ENCODE measurements at regions of chr11 and their contacts with region 1.

Region 1: GRCh38 chr11:58579192-58580129 is 598 bp downstream of the ZFP91 start:
- DNase-seq: peak; percentile 88
- H3K4me3 Mint-ChIP-seq: peak overlapping the region; percentile 100
- H3K27ac Mint-ChIP-seq: peak overlapping the region; percentile 100
- H3K4me1 Mint-ChIP-seq: peaks cover 26% of the 10 kb centered on the region
- H3K27me3 Mint-ChIP-seq: no peaks in the 10 kb centered on the region
- CTCF ChIP-seq: peak; percentile 55

Region 2: GRCh38 chr11:57667736-57668435 is 911.6 kb before region 1 on chr11 and contains the start of gene ZDHHC5:
- CTCF ChIA-PET with region 1: no interaction called
- POLR2A ChIA-PET with region 1: interaction called, 7 read pairs
- intact Hi-C with region 1: loop called (anchors 1 kb)
- DNase-seq: peak; percentile 99
- H3K4me3 Mint-ChIP-seq: peak within 1 kb of the TSS; percentile 96
- H3K27ac Mint-ChIP-seq: peak within 1 kb of the TSS; percentile 100
- H3K4me1 Mint-ChIP-seq: peaks cover 18% of the 10 kb centered on the region
- H3K27me3 Mint-ChIP-seq: no peaks in the 10 kb centered on the region
- CTCF ChIP-seq: peak; percentile 44
- total RNA-seq, gene ZDHHC5: 73.8 and 74.6 TPM in 2 replicates

Region 3: GRCh38 chr11:58179648-58180047 is 399.8 kb before region 1 on chr11:
- CTCF ChIA-PET with region 1: no interaction called
- POLR2A ChIA-PET with region 1: no interaction called
- intact Hi-C with region 1: no loop called
- DNase-seq: no peak
- H3K4me3 Mint-ChIP-seq: no peak overlapping the region
- H3K27ac Mint-ChIP-seq: no peak overlapping the region
- H3K4me1 Mint-ChIP-seq: no peaks in the 10 kb centered on the region
- H3K27me3 Mint-ChIP-seq: no peaks in the 10 kb centered on the region
- CTCF ChIP-seq: no peak

Region 4: GRCh38 chr11:58629857-58630256 is 50.4 kb after region 1 on chr11:
- CTCF ChIA-PET with region 1: interaction called, 41 read pairs
- POLR2A ChIA-PET with region 1: interaction called, 89 read pairs
- intact Hi-C with region 1: loop called (anchors 1 kb)
- DNase-seq: peak; percentile 61
- H3K4me3 Mint-ChIP-seq: no peak overlapping the region
- H3K27ac Mint-ChIP-seq: no peak overlapping the region
- H3K4me1 Mint-ChIP-seq: peaks cover 28% of the 10 kb centered on the region
- H3K27me3 Mint-ChIP-seq: no peaks in the 10 kb centered on the region
- CTCF ChIP-seq: peak; percentile 51

Region 5: DNA sequence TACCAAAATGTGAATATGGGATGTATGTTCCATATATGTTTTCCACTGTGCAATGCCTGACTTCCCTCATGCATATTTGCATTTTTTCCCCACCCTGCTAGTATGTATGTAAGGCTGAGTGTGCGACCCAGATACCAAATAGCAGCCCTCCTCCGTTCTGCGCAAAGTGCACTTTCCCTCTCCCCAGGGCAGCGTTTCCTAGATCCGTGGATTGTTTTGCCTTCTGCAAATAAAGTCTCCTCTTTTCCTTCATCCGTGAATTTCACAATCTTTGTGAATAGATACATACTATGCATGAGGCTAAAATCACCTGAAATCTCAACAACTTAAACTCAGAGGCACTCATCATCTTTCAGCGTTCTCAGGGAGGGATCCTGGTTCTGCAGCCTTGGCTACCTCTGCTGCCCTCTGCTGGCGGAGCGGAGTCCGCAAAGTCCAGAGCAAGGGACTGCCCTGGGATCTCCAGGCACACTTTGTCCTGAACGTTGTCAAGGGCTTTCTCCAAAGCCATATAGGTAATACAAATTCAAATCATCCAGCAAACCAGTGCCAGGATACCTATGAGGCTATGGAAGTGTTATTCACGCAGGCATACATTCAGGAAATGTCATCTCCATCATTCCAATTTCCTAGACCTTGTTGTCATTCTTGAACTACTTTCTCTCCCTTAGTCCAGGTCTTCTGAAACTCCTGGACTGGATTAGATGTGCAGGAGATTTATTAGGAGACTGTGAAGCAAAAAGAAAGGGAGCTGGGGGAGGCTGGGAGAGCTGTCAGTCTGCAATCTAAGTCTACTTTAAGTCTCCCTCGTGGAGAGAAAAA is 96.1 kb after region 1 on chr11:
- CTCF ChIA-PET with region 1: interaction called, 20 read pairs
- POLR2A ChIA-PET with region 1: no interaction called
- intact Hi-C with region 1: no loop called
- DNase-seq: peak; percentile 63
- H3K4me3 Mint-ChIP-seq: no peak overlapping the region
- H3K27ac Mint-ChIP-seq: no peak overlapping the region
- H3K4me1 Mint-ChIP-seq: no peaks in the 10 kb centered on the region
- H3K27me3 Mint-ChIP-seq: no peaks in the 10 kb centered on the region
- CTCF ChIP-seq: peak; percentile 83

Region 6: DNA sequence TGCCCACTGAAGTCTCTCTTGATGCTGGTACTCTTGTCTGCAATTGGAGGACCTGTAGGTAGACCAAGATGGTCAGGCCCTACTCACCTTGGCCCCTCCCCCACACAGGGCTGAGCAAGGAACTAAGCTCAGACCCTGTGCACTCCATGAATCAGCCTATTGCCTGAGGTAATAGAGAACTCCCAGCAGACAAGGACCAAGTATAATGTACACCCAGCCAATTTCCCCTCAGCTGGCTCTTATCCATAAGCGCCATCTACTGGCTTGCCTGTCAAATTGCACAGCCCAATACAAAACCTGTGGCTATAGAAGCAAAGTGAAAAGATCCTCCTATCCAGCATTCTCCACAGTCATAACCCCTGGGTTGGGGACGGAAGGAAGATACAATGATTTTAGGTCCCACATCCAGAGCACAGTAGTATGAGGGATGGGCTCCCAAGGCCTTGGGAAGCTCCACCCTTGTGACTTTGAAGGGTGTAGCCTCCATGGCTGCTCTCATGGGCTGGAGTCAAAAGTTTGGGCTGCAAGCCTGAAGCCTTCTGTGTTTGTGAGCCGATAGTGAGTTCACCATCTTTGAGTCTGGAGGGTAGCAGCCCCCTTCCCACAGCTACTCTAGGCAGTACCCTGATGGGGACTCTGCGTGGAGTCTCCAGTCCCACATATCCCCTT is 209.0 kb after region 1 on chr11:
- CTCF ChIA-PET with region 1: interaction called, 38 read pairs
- POLR2A ChIA-PET with region 1: interaction called, 3 read pairs
- intact Hi-C with region 1: loop called (anchors 1 kb)
- DNase-seq: peak; percentile 78
- H3K4me3 Mint-ChIP-seq: no peak overlapping the region
- H3K27ac Mint-ChIP-seq: no peak overlapping the region
- H3K4me1 Mint-ChIP-seq: peaks cover 7% of the 10 kb centered on the region
- H3K27me3 Mint-ChIP-seq: no peaks in the 10 kb centered on the region
- CTCF ChIP-seq: peak; percentile 89

Region 7: DNA sequence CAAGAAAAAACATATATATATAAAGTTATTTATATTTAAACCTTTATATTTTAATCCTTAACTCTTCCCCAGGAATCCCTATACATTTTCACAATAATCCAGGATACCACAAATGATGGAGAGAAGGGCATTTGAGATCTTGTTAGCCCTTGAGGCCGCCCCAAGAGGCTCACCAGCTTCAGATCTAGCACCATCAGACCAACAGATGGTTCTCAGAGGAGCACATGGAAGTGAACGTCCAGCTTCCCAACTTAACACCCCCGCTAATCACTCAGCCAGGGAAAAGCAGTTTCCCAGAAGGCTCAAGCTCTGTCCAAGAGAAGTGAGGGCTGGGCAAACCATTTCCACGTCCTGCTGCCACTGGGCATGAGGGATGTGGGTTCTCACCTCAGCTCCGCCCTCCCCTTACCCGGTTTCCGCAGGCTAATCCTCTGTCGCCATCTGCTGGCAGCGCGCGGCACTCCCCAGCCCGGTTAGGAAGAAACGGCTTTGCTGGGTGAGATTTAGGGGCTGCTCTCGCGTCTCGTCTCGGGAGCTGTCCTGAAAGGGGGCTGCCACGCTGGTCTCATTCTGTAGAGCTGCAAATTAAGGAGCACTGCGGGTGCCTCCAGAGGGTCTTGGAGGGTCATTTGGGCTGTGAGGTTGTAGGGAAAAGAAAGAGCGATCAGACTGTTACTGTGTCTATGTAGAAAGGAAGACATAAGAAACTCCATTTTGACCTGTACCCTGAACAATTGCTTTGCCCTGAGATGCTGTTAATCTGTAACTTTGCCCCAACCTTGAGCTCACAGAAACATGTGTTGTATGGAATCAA is 556.4 kb after region 1 on chr11:
- CTCF ChIA-PET with region 1: interaction called, 10 read pairs
- POLR2A ChIA-PET with region 1: no interaction called
- intact Hi-C with region 1: loop called (anchors 5 kb)
- DNase-seq: peak; percentile 73
- H3K4me3 Mint-ChIP-seq: no peak overlapping the region
- H3K27ac Mint-ChIP-seq: peak overlapping the region; percentile 24
- H3K4me1 Mint-ChIP-seq: peaks cover 6% of the 10 kb centered on the region
- H3K27me3 Mint-ChIP-seq: no peaks in the 10 kb centered on the region
- CTCF ChIP-seq: peak; percentile 98

Region 8: DNA sequence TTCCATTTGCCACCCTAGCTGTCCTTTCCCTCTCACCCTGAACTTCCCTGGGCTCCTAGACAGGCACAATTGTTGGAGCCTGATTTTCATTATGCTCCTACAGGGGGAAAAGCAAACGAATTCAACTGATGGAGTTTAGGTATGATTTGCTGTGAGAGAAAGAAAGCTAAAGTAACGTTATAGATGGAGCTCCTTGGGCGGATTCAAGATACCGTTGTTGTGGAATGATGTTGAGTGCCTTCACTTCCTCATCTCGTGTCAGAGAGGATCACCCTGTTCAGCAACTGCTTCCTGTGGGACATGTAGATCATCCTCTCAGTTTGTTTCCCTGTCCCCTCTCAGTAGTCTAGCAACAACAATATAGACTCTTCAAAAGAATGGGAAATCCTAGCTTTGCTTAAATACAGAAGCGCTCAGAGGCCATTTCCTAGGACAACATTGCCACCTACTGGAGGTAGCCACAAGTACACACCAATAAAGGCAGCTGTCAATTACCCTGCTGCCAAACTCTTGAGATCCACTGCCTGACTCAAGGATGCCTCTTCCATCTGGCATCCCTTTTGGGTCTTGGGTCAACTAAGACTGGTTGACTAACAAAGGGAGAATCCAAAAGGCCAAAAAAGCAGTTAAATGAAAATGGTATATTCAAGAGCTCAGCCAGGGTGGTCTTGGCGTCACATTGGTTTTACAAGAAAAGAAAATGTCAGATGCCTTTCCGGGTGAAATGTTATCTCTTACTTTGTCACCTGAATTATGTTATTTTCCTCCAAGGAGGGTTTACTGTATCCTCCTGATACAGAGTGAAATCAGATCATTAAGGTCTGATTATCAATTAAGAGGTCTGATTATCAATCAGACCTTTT is 579.0 kb after region 1 on chr11:
- CTCF ChIA-PET with region 1: interaction called, 4 read pairs
- POLR2A ChIA-PET with region 1: interaction called, 3 read pairs
- intact Hi-C with region 1: loop called (anchors 5 kb)
- DNase-seq: peak; percentile 78
- H3K4me3 Mint-ChIP-seq: no peak overlapping the region
- H3K27ac Mint-ChIP-seq: no peak overlapping the region
- H3K4me1 Mint-ChIP-seq: no peaks in the 10 kb centered on the region
- H3K27me3 Mint-ChIP-seq: peaks cover 17% of the 10 kb centered on the region
- CTCF ChIP-seq: peak; percentile 76